ENCODE measurements at regions of chr11 and their contacts with region 1.

Region 1: GRCh38 chr11:34585735-34586487 is 35.0 kb upstream of the EHF start:
- DNase-seq: no peak
- H3K4me3 ChIP-seq: no peak overlapping the region
- H3K27ac ChIP-seq: no peak overlapping the region
- H3K4me1 ChIP-seq: peaks cover 0 to 6% of the 10 kb centered on the region in 2 donors
- H3K27me3 ChIP-seq: no peaks in the 10 kb centered on the region
- CTCF ChIP-seq: peak in 5 of 6 experiments; percentile 49 to 94 (median 73)
- POLR2A ChIP-seq: no peak

Region 2: DNA sequence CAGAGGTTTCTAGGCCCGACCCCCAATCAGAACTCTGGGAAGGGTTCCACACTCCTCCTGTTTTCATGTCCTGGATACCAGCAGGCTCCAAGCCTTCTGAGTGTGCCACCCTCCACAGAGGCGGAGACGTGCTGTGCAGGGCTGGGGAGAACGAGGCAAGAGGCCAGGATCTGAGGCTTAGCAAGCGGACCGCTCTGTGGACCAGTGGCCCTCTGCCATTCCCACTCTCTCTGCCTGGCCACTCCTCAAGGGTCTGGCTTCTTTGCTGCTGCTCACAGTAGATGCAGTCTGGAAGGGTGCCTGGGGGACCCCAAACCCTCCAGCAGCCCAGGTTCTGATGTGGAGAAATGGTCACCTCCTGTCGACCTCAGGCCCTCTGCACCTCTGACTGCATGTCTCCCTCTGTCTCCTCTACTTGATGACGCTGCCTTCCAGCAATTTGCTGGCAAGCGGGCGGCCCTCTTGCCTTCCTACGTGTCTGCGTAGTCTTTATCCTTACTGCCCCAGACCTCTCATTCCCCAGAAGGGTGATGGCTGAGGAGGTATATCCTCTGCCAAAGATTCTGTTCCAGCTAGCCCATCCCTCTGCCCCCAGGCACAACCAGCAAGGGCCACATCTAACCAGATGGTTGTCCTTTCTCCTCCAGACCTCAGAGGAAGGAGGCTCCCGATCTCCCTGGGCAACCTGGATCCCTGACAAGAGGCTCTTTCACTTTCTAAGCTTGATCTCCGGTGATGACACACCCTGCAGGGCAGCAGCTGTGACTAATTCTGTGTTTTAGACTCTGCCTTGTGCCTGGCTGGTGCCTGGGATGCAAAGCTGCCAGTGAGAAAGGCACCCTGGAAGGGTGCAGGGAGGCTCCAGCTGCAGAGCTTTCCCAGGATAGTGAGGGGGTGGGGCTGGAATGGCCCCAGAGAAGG is 393.2 kb before region 1 on chr11:
- intact Hi-C with region 1: no loop called
- DNase-seq: peak in 1 of 2 donors; percentile 28
- H3K4me3 ChIP-seq: no peak overlapping the region
- H3K27ac ChIP-seq: peak overlapping the region in 1 of 3 donors; percentile 38
- H3K4me1 ChIP-seq: peaks cover 12 to 16% of the 10 kb centered on the region in 2 donors
- H3K27me3 ChIP-seq: no peaks in the 10 kb centered on the region
- CTCF ChIP-seq: no peak
- POLR2A ChIP-seq: no peak

Region 3: DNA sequence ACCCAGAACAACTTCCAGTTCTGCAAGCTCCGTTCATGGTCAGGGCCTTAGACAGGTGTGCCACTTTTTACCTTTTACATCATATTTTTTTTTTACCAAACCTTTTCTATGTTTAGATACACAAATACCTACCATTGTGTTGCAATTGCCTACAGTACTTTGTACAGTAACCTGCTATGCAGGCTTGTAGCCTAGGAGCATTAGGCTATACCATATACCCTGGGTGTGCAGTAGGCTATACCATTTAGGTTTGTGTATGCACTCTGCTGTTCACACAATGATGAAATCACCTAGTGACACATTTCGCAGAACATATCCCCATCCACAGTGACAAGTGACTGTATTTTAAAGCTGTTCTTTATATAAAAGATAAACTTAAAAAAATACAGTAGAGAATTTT is 300.7 kb after region 1 on chr11:
- intact Hi-C with region 1: loop called (anchors 5 kb)
- DNase-seq: no peak
- H3K4me3 ChIP-seq: no peak overlapping the region
- H3K27ac ChIP-seq: no peak overlapping the region
- H3K4me1 ChIP-seq: no peaks in the 10 kb centered on the region
- H3K27me3 ChIP-seq: no peaks in the 10 kb centered on the region
- CTCF ChIP-seq: no peak
- POLR2A ChIP-seq: no peak

Region 4: GRCh38 chr11:35391922-35392813 is 806.3 kb after region 1 on chr11:
- intact Hi-C with region 1: loop called (anchors 10 kb)
- DNase-seq: peak; percentile 76 to 84
- H3K4me3 ChIP-seq: peak overlapping the region in 1 of 3 donors; percentile 0
- H3K27ac ChIP-seq: peak overlapping the region in 2 of 3 donors; percentile 55 to 87
- H3K4me1 ChIP-seq: peaks cover 25 to 28% of the 10 kb centered on the region in 2 donors
- H3K27me3 ChIP-seq: no peaks in the 10 kb centered on the region
- CTCF ChIP-seq: peak; percentile 54 to 96 (median 84)
- POLR2A ChIP-seq: no peak